ENCODE measurements at regions of chr21 and their contacts with region 1.

Region 1: DNA sequence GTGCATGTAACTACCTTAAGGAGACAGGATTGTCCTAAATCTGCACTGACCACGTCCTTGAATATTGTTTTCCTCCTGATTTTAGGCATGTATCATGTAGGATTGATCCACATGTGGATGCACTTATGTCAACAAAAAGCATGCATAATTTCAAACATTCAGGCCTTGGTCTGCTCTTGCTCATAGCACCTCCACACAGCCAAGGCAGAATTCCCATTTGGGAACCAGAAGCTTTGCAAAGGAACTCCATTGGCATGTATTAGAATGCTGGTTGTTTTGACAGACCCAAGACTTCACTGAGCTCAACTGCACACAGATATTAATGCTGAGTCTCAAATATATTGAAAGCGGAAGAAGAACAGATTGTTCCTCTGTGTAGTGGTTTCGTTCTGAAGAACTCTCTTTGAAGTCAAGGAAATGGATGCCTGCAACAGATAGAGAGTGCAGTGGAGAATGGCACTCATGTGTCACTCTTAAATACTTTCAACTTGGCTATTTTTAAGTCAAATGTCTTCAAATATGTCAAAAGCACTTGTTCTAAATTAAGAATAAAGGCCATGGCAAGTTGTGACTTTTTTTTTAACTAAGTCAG is 387.6 kb downstream of the LTN1 start:
- DNase-seq: no peak
- H3K4me3 ChIP-seq: no peak overlapping the region
- H3K27ac ChIP-seq: no peak overlapping the region
- H3K27me3 ChIP-seq: no peaks in the 10 kb centered on the region
- CTCF ChIP-seq: no peak

Region 2: DNA sequence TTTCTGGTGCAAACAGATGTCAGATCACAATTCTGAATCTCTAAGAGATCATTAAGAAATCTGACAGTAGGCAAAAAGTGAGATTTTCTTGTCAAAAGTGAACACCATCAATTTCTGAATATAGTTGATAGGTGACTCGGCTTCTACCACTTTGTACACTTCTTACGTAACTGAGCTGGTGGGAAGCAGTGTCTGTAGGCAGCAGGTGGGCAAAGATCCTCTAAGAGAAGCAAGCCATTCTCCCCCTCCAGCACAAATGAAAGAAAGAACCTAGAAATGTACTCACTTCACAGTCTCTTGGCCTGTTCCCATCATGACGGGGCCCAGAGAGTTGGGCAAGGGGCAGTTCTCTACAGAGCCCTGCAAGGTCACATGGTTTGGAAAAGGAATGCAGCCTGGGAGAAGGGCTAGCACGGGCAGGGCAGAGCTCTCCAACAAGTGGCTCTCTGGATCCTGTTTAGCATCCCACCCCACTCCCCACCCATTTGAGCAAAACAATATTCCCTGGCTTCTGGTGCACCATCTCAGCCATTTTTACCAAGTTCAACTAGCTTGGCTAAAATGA is 25.0 kb before region 1 on chr21:
- CTCF ChIA-PET with region 1: no interaction called
- POLR2A ChIA-PET with region 1: interaction called, 11 read pairs
- DNase-seq: no peak
- H3K4me3 ChIP-seq: no peak overlapping the region
- H3K27ac ChIP-seq: no peak overlapping the region
- H3K27me3 ChIP-seq: no peaks in the 10 kb centered on the region
- CTCF ChIP-seq: no peak

Region 3: DNA sequence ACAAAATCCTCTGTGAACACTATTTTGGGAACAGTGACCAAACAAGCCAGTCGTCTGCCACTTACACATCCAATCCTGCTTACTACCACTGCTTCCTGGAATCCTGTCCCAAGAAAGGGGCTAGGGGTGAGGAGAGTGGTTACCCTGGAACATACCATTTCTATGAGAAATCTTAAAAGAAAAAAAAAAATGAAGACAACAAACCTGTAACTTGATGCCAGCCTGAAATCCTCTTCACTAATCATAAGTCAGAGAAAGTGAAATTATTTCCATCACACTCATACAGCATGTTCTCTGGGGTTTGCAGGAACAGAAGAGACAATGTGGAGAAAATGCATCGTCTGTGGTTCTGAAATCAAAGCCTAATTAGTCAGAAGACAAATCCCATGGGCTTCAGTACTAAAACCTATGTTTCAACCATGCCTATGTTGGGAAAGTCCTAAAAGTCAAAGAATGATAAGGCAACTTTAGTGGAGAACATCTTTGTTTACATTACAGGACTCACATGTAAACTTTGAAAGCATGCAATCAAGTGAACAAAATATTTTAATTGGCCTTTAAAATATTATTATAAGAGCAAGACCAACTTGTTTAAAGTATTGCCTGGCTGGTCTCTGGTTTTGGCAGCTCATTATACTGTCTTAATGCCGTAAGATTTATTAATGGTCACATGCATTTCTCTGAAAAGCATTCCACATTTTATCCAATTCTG is 166.9 kb after region 1 on chr21:
- CTCF ChIA-PET with region 1: no interaction called
- POLR2A ChIA-PET with region 1: no interaction called
- DNase-seq: peak; percentile 69
- H3K4me3 ChIP-seq: peak overlapping the region; percentile 39
- H3K27ac ChIP-seq: peak overlapping the region; percentile 94
- H3K27me3 ChIP-seq: no peaks in the 10 kb centered on the region
- CTCF ChIP-seq: no peak

Measured in AG04450 (cell line).